ENCODE measurements at regions of chr2 and their contacts with region 1.

Region 1: DNA sequence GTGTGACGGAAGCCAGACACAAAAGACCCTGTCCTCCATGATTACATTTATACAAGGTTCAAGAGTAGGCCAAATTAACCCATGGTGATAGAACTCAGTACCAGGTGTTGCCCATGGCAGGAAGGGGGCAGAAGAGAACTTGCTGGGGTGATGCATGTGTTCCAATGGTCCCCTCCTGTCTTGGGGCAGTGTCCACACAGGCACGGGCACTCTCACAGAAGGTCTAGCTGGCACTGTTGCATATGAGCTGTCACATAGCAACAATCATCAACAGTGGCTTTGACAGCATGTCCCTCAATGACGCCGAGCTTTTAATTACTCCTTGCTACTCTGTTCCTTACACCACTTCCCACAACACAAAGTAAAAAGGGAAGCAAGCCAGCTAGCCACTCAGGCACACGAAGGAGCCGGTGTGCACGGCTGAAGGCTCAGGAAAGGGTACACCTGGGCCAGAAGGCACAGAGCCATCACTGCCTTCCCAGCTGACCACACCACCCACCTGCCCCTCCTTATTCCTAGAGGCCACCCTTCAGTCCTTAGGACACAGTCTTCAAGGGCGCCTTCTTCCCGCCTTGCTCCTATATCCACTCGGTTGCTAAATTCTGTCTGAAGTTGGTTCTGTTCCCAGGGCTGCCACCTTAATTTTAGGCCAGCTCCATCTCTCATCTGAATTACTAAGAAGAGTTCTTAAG is 28.9 kb downstream of the RPL31 start:
- DNase-seq: no peak
- H3K4me3 ChIP-seq: no peak overlapping the region
- H3K27ac ChIP-seq: no peak overlapping the region
- H3K4me1 ChIP-seq: no peaks in the 10 kb centered on the region
- H3K27me3 ChIP-seq: no peaks in the 10 kb centered on the region
- CTCF ChIP-seq: no peak

Region 2: GRCh38 chr2:101157272-101157671 is 126.3 kb after region 1 on chr2:
- intact Hi-C with region 1: loop called (anchors 5 kb)
- DNase-seq: no peak
- H3K4me3 ChIP-seq: no peak overlapping the region
- H3K27ac ChIP-seq: no peak overlapping the region
- H3K4me1 ChIP-seq: peaks cover 0 to 27% (median 7%) of the 10 kb centered on the region in 4 donors
- H3K27me3 ChIP-seq: no peaks in the 10 kb centered on the region
- CTCF ChIP-seq: no peak